B cell (primary cell): ENCODE measurements at regions of chr1 and their contacts with region 1.

Region 1: GRCh38 chr1:221097479-221098383 is 218.5 kb downstream of the HLX start:
- DNase-seq: no peak
- ATAC-seq: no peak
- H3K4me3 ChIP-seq: no peak overlapping the region
- H3K4me3 Mint-ChIP-seq: no peak overlapping the region
- H3K27ac ChIP-seq: no peak overlapping the region
- H3K27ac Mint-ChIP-seq: no peak overlapping the region
- H3K4me1 ChIP-seq: peaks cover 17 to 19% of the 10 kb centered on the region in 2 donors
- H3K4me1 Mint-ChIP-seq: peaks cover 25% of the 10 kb centered on the region
- H3K27me3 ChIP-seq: no peaks in the 10 kb centered on the region
- H3K27me3 Mint-ChIP-seq: no peaks in the 10 kb centered on the region
- CTCF ChIP-seq: no peak

Region 2: DNA sequence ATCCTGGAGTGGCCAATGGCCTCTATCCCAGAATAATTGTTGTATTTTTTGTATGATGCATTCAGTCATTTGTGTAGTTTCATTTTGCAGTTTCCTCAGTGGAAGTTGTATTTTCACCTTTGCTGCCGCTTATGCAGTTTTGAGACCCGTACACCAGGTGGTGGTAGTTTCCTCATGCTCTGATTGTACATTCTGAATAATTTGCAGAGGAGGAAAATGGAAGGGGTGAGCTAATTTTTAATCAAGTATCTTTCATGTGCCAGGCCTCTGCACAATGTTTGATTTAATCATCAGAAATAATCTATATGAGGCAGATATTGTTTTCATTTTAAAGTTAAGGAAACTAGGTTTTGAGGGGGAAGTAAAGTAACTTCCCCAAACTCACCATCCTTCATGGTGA is 189.0 kb before region 1 on chr1:
- CTCF ChIA-PET with region 1: interaction called, 29 read pairs
- POLR2A ChIA-PET with region 1: no interaction called
- intact Hi-C with region 1: loop called (anchors 2 kb)
- DNase-seq: peak; percentile 49
- ATAC-seq: peak; percentile 36
- H3K4me3 ChIP-seq: no peak overlapping the region
- H3K4me3 Mint-ChIP-seq: no peak overlapping the region
- H3K27ac ChIP-seq: no peak overlapping the region
- H3K27ac Mint-ChIP-seq: no peak overlapping the region
- H3K4me1 ChIP-seq: peaks cover 7 to 10% of the 10 kb centered on the region in 2 donors
- H3K4me1 Mint-ChIP-seq: peaks cover 9% of the 10 kb centered on the region
- H3K27me3 ChIP-seq: peaks cover 0 to 7% (median 0%) of the 10 kb centered on the region in 4 experiments
- H3K27me3 Mint-ChIP-seq: peaks cover 14% of the 10 kb centered on the region
- CTCF ChIP-seq: peak; percentile 62

Region 3: DNA sequence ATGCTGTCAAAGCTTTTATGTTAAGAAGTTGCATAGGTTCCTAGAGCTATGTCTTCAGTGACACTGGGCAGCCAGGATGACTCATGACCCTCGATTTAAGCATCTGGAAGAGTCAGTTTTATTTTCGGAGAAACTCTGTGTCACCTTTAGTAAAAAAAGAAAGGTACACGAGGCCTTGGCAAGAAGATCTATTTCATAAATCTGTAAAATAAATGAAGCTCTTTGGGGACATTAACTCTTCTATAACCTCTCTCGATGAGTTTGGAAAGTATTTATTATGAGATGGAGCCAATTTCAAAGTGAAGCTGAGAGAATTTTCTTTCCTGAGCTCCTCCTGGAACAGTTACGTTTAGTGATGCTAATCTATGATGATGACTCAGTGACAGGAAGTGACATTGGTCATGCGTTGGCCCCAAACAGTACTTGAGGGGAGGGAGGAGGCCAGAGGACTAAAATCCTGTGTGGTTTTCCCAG is 62.0 kb before region 1 on chr1:
- CTCF ChIA-PET with region 1: no interaction called
- POLR2A ChIA-PET with region 1: no interaction called
- intact Hi-C with region 1: loop called (anchors 5 kb)
- DNase-seq: no peak
- ATAC-seq: no peak
- H3K4me3 ChIP-seq: no peak overlapping the region
- H3K4me3 Mint-ChIP-seq: no peak overlapping the region
- H3K27ac ChIP-seq: no peak overlapping the region
- H3K27ac Mint-ChIP-seq: no peak overlapping the region
- H3K4me1 ChIP-seq: no peaks in the 10 kb centered on the region
- H3K4me1 Mint-ChIP-seq: peaks cover 17% of the 10 kb centered on the region
- H3K27me3 ChIP-seq: no peaks in the 10 kb centered on the region
- H3K27me3 Mint-ChIP-seq: no peaks in the 10 kb centered on the region
- CTCF ChIP-seq: no peak

Region 4: GRCh38 chr1:221045842-221046831 is 51.6 kb before region 1 on chr1:
- CTCF ChIA-PET with region 1: interaction called, 13 read pairs
- POLR2A ChIA-PET with region 1: no interaction called
- intact Hi-C with region 1: no loop called
- DNase-seq: peak; percentile 82
- ATAC-seq: peak; percentile 87
- H3K4me3 ChIP-seq: peak overlapping the region in 4 of 5 experiments; percentile 11 to 52 (median 36)
- H3K4me3 Mint-ChIP-seq: peak overlapping the region; percentile 88
- H3K27ac ChIP-seq: peak overlapping the region; percentile 75 to 94
- H3K27ac Mint-ChIP-seq: peak overlapping the region; percentile 97
- H3K4me1 ChIP-seq: peaks cover 34 to 36% of the 10 kb centered on the region in 2 donors
- H3K4me1 Mint-ChIP-seq: peaks cover 54% of the 10 kb centered on the region
- H3K27me3 ChIP-seq: no peaks in the 10 kb centered on the region
- H3K27me3 Mint-ChIP-seq: no peaks in the 10 kb centered on the region
- CTCF ChIP-seq: no peak

Region 5: GRCh38 chr1:221069178-221069903 is 28.4 kb before region 1 on chr1:
- CTCF ChIA-PET with region 1: interaction called, 21 read pairs
- POLR2A ChIA-PET with region 1: no interaction called
- intact Hi-C with region 1: loop called (anchors 1 kb)
- DNase-seq: peak; percentile 85
- ATAC-seq: peak; percentile 85
- H3K4me3 ChIP-seq: peak overlapping the region in 4 of 5 experiments; percentile 13 to 46 (median 28)
- H3K4me3 Mint-ChIP-seq: peak overlapping the region; percentile 76
- H3K27ac ChIP-seq: peak overlapping the region; percentile 80 to 87
- H3K27ac Mint-ChIP-seq: peak overlapping the region; percentile 99
- H3K4me1 ChIP-seq: peaks cover 68 to 75% of the 10 kb centered on the region in 2 donors
- H3K4me1 Mint-ChIP-seq: peaks cover 78% of the 10 kb centered on the region
- H3K27me3 ChIP-seq: no peaks in the 10 kb centered on the region
- H3K27me3 Mint-ChIP-seq: no peaks in the 10 kb centered on the region
- CTCF ChIP-seq: no peak

Region 6: GRCh38 chr1:221166559-221167318 is 69.0 kb after region 1 on chr1:
- CTCF ChIA-PET with region 1: interaction called, 3 read pairs
- POLR2A ChIA-PET with region 1: no interaction called
- intact Hi-C with region 1: loop called (anchors 5 kb)
- DNase-seq: peak; percentile 73
- ATAC-seq: peak; percentile 82
- H3K4me3 ChIP-seq: peak overlapping the region in 2 of 5 experiments; percentile 25 to 54
- H3K4me3 Mint-ChIP-seq: peak overlapping the region; percentile 35
- H3K27ac ChIP-seq: no peak overlapping the region
- H3K27ac Mint-ChIP-seq: peak overlapping the region; percentile 7
- H3K4me1 ChIP-seq: peaks cover 37 to 54% of the 10 kb centered on the region in 2 donors
- H3K4me1 Mint-ChIP-seq: peaks cover 53% of the 10 kb centered on the region
- H3K27me3 ChIP-seq: peaks cover 0 to 32% (median 17%) of the 10 kb centered on the region in 4 experiments
- H3K27me3 Mint-ChIP-seq: peaks cover 12% of the 10 kb centered on the region
- CTCF ChIP-seq: no peak

Region 7: DNA sequence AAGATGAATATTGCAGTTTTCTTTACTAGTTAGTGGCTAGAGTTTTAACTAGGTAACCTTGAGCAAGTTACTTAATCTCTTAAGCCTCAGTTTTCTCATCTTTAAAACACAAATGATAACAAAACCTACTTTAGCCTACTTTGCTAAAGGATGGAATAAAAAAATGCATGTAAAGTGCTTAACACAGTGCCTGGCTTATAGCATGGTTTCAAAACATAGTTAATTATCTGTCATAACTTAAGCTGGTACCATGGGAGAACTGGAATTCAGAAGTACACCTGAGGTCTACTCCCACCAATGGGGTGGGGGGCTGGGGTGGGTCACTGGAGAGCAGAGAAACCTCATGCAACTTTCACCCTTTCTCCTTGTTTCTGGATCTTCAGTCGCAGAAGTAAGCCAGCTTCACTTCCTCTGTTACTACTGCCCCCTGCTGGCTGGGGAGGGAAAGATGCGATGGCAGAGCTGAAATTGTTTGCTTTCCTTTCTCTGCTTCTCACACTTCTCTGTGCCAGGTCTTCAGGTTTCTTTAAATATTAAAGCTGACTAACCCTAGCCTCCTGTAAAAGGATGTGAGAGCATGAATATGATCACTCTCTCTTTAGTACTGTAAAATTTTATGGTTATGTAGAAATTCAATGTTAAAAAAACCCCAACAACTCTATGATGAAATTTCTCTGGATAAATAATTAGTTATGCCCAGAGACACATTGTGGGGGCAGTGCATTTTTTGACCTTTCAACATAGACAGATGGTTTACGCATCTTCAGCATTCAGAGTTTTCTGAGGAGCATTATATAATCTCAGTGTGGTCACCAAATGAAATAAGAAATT is 105.7 kb after region 1 on chr1:
- CTCF ChIA-PET with region 1: interaction called, 41 read pairs
- POLR2A ChIA-PET with region 1: no interaction called
- intact Hi-C with region 1: no loop called
- DNase-seq: peak; percentile 82
- ATAC-seq: peak; percentile 66
- H3K4me3 ChIP-seq: no peak overlapping the region
- H3K4me3 Mint-ChIP-seq: no peak overlapping the region
- H3K27ac ChIP-seq: no peak overlapping the region
- H3K27ac Mint-ChIP-seq: no peak overlapping the region
- H3K4me1 ChIP-seq: peaks cover 3% of the 10 kb centered on the region in 2 donors
- H3K4me1 Mint-ChIP-seq: peaks cover 3% of the 10 kb centered on the region
- H3K27me3 ChIP-seq: peaks cover 0 to 4% (median 2%) of the 10 kb centered on the region in 4 experiments
- H3K27me3 Mint-ChIP-seq: peaks cover 18% of the 10 kb centered on the region
- CTCF ChIP-seq: peak; percentile 98